Sciatic nerve (tissue), 2 donors: ENCODE measurements at regions of chr5 and their contacts with region 1.

Region 1: DNA sequence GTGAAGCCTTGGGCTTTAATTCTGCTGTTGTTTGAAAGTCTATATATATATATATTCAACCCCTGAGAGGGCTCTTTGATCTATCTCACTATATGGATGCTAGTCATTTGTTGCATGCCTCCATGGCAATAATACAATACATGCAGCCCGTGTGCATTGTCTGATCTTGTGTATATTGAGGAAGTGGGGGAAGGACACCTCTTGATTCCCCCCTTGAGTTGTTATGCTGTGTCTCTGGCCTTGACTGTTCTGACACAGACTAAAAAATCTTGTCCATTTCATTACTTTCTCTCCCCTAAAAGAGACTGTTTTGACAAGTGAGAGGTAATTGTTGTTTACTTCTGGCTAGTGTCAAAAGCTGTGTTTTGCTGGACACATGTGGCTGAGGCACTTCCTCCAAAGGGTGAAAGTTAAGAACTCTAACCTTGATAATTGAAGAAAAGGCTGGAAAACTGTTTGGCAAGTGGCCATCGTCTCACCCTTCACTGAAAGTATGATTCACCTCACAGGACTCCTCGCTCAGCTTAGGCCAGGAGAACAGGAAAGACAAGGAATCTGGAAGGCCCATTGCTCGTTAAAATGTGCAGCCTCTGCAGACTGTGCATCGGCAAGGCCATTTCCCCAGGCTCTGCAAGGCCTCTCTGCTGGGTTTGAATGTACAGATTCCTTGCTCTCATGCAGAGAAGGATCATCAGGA is 304.0 kb downstream of the PRELID2 start:
- DNase-seq: no peak
- ATAC-seq: no peak

Region 2: GRCh38 chr5:145462525-145462924 is 68.7 kb before region 1 on chr5:
- intact Hi-C with region 1: no loop called
- DNase-seq: no peak
- ATAC-seq: no peak

Region 3: GRCh38 chr5:145568581-145568980 is 37.4 kb after region 1 on chr5:
- intact Hi-C with region 1: loop called (anchors 2 kb)
- DNase-seq: no peak
- ATAC-seq: no peak